ENCODE measurements at regions of chr2 and their contacts with region 1.

Region 1: DNA sequence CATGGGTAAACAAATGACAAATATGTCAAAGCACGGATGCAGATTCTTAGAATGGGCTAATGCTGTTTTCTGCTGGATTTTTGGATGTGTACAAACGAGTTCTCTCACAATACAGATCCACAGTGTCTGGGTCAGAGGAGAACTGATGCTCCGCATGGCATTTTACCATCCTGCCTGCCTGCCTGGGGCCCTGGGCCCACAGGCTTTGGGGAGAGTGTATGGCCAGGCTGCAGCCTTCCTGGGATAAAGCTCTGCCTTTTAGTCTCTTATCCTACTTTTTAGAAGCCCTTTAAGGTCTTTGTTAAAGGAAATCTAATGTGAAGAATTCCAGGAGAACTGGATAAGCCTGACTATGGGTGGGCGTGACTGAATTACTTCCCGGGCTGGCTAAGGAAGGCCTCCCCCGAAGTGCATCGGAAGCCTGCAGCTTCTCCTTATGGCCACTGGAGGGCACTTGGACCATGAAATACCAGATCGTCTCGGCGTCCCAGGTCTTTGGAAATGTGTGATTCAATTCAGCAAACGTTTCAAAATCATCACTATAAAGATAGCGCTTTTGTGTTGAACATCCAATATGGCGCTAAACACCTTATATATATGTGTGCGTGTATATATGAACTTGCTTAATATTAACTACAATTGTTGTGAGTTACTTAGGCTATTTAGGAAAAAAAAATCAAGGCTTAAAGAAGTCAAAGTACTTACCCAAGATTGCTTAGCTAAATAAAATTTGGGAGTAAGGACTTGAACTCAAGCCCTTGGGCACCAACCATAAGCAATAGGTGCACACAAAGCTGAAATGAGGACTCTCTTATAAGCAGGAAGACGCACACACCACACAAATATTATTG is 15.2 kb upstream of the DNPEP start:
- H3K4me3 Mint-ChIP-seq: no peak overlapping the region
- H3K27ac Mint-ChIP-seq: peak overlapping the region; percentile 99
- H3K4me1 Mint-ChIP-seq: peaks cover 72% of the 10 kb centered on the region
- H3K27me3 Mint-ChIP-seq: peaks cover 16% of the 10 kb centered on the region

Region 2: DNA sequence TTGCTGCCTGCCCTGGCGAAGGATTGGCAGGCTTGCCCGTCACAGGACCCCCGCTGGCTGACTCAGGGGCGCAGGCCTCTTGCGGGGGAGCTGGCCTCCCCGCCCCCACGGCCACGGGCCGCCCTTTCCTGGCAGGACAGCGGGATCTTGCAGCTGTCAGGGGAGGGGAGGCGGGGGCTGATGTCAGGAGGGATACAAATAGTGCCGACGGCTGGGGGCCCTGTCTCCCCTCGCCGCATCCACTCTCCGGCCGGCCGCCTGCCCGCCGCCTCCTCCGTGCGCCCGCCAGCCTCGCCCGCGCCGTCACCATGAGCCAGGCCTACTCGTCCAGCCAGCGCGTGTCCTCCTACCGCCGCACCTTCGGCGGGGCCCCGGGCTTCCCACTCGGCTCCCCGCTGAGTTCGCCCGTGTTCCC is 15.3 kb after region 1 on chr2 and contains the start of gene DES:
- intact Hi-C with region 1: no loop called
- H3K4me3 Mint-ChIP-seq: no peak within 1 kb of the TSS
- H3K27ac Mint-ChIP-seq: peak within 1 kb of the TSS; percentile 38
- H3K4me1 Mint-ChIP-seq: peaks cover 18% of the 10 kb centered on the region
- H3K27me3 Mint-ChIP-seq: peaks cover 65% of the 10 kb centered on the region

Region 3: GRCh38 chr2:219433666-219434467 is 31.0 kb after region 1 on chr2:
- intact Hi-C with region 1: loop called (anchors 1 kb)
- H3K4me3 Mint-ChIP-seq: no peak overlapping the region
- H3K27ac Mint-ChIP-seq: no peak overlapping the region
- H3K4me1 Mint-ChIP-seq: peaks cover 10% of the 10 kb centered on the region
- H3K27me3 Mint-ChIP-seq: peaks cover 34% of the 10 kb centered on the region

Measured in dendritic cell treated with granulocyte-macrophage colony-stimulating factor and Interleukin-4, amounts not matched to agents 40 ng/mL and 50 ng/mL, for 4 days (primary cell).